ENCODE measurements at regions of chr10 and their contacts with region 1.

Region 1: DNA sequence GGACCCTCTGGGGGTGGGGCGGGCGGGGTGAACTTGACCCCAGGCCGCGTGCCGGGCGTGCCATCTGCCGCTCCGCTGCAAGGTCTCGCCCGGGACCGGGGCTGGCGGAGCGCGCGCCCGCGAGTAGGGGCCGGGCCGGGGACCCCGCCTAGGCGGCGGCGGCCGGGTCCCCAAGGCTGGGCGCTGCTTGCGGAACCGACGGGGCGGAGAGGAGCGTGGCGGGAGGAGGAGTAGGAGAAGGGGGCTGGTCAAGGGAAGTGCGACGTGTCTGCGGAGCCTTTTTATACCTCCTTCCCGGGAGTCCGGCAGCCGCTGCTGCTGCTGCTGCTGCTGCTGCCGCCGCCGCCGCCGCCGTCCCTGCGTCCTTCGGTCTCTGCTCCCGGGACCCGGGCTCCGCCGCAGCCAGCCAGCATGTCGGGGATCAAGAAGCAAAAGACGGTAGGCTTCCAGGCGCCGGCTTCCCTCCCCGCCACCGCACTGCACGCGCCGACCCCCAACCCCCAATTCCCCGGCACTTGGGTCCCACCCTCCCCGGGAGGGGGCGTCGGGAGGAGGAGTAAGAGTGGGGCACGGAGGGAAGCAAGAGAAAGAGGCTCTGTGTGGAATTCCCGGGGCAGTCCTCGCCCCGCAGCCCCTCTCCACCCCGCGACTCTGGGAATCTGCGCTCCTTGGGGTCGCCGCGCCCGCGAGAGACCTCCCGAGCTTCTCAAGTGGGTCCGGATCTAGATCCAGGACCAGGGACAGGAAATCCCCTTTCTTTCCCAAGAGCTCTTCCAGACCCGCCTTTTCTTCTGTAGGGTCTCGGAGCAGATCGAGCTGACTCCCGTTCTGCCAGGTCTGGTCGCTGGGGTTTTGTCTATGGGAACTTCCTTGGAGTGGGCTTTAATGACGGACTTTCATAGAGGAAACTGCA is at the start of gene PAPSS2:
- DNase-seq: peak in 9 of 10 donors; percentile 16 to 89 (median 33)

Region 2: DNA sequence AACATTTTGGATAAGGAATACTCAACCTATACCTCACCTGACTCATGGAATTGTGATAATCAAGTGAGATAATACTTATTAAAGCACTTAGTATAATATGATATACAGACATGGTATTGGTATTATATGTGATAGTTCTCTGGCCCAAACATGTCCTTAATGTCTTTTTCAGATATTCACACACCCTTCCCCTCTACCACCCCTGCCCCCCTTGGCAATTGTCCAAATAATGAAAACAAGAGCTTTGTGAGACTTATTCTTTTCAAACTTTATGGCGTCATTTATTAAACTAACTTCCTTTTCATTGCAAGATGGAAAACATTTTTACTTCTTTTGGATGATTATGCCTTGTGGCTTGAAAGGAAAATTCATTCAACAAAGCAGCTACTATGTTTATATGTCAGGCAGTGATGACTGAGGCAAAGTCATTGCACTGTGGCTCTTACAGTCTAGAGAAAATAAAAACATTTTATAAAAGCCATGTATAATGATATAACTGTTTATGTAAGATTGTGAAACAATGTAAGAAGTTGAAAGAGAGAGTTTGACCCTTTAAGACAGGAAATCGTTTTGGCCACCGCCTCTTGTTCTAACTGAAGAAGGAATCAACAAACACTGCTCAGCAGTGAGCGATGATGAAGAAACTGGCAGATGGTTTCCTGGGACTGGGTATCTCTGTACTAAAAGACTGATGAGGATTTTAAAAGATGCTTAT is 127.8 kb before region 1 on chr10:
- intact Hi-C with region 1: loop called (anchors 10 kb)
- DNase-seq: no peak

Region 3: GRCh38 chr10:87734987-87735827 is 75.4 kb after region 1 on chr10:
- intact Hi-C with region 1: loop called (anchors 2 kb)
- DNase-seq: no peak

Region 4: DNA sequence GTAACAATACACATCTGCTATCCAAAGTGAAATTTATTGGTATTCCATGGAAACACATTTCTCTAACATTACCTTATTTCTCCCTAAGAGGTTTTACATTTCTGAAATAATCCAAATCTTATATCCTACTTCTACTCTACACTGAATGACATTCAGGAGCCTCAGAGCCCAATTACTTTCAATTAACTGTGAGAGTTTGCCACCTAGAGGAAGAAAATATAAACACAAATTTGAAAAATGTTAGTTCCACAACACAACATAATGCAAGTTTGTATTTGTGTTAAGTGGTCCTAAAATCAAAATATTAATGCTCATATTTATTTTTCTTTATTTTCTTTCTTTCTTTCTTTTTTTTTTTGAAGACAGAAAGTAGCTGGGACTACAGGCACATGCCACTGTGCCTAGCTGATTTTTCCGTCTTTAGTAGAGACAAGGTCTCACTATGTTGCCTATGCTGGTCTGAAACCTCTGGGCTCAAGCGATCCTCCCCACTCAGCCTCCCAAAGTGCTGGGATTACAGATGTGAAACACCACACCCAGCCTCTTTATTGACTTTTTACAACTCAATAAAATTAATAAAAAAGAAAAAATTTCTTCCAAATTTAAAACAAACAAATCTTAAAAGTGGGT is 112.2 kb after region 1 on chr10:
- intact Hi-C with region 1: loop called (anchors 2 kb)
- DNase-seq: no peak